ENCODE measurements at regions of chr4 and their contacts with region 1.

Region 1: DNA sequence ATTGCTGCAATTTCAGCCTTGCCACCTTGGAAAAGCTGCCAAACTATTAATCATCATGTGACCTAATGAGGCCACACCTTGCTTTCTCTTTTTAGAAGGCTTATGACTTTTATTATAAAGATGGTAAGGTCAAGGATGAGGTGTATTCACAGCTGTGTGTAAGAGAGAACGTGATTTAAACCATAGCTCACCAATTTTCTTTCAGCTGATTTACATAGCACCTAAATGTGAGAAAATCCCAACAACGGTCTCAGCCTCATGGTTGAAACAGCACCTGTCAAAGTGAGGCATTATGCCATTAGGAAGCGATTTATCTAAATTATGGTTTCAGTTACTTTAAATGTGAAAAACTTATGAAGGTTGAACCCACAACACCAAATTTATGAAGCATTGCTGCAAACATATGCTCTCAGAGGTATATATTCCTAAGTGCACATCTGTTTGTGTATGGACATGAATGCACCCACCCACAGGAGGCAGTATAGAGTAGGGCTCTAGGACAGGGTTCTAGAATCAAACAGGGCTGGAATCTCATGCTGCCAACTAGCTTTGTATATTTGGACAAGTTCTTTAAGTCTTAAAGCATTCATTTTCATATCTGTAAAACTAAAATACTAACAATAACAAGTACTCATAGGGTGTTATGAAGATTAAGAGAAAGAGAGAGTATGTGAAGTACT is 40.7 kb downstream of the ANXA3 start:
- DNase-seq: no peak
- CTCF ChIP-seq: peak; percentile 18

Region 2: DNA sequence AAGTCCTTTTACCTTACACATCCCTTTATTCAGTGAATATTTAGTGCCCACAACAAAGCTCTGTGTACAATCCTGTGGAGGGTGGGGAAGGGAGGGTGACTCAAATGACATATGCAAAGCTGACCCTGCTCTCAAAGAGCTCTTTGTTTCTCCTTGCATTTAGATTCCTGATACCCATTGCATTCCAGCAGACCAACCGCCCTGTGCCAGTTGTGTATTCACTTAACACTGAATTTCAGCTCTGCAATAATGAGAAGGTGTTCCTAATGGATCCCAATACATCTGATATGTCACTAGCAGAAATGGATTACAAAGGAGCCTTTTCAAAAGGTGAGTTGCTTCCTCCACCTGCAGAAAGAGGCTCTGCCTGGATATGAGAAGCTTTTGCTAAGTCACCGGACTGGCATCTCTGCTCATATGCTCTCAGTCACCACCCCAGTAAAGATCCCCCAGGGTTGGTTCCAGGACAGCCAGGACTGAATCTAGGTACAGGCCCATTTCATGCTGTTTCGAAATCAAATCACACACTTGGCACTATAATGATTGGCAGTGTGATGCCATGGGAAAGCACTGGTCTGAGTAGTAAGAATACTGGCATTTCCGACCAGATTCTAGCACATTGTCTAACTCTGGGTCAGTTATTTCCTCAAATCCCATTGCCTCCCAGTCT is 57.8 kb before region 1 on chr4:
- CTCF ChIA-PET with region 1: no interaction called
- POLR2A ChIA-PET with region 1: no interaction called
- DNase-seq: no peak
- CTCF ChIP-seq: no peak

Region 3: GRCh38 chr4:78581618-78582017 is 10.6 kb before region 1 on chr4:
- CTCF ChIA-PET with region 1: interaction called, 19 read pairs
- POLR2A ChIA-PET with region 1: no interaction called
- DNase-seq: no peak
- CTCF ChIP-seq: no peak

Region 4: GRCh38 chr4:78784236-78784865 is 192.1 kb after region 1 on chr4:
- CTCF ChIA-PET with region 1: no interaction called
- POLR2A ChIA-PET with region 1: no interaction called
- DNase-seq: no peak
- CTCF ChIP-seq: no peak

Measured in GM10248 (cell line).